Activated CD4-positive, alpha-beta T cell treated with anti-CD3 and anti-CD28 coated beads, Interleukin-2, amount 10 ng/mL, durations not matched to agents 24 days and 14 days (primary cell): ENCODE measurements at regions of chr11 and their contacts with region 1.

Region 1: GRCh38 chr11:128630367-128631230 is 43.2 kb upstream of the ETS1 start:
- DNase-seq: peak; percentile 96
- H3K4me3 Mint-ChIP-seq: peak overlapping the region; percentile 69
- H3K27ac Mint-ChIP-seq: peak overlapping the region; percentile 92
- H3K4me1 Mint-ChIP-seq: peaks cover 61% of the 10 kb centered on the region
- H3K27me3 Mint-ChIP-seq: no peaks in the 10 kb centered on the region

Region 2: DNA sequence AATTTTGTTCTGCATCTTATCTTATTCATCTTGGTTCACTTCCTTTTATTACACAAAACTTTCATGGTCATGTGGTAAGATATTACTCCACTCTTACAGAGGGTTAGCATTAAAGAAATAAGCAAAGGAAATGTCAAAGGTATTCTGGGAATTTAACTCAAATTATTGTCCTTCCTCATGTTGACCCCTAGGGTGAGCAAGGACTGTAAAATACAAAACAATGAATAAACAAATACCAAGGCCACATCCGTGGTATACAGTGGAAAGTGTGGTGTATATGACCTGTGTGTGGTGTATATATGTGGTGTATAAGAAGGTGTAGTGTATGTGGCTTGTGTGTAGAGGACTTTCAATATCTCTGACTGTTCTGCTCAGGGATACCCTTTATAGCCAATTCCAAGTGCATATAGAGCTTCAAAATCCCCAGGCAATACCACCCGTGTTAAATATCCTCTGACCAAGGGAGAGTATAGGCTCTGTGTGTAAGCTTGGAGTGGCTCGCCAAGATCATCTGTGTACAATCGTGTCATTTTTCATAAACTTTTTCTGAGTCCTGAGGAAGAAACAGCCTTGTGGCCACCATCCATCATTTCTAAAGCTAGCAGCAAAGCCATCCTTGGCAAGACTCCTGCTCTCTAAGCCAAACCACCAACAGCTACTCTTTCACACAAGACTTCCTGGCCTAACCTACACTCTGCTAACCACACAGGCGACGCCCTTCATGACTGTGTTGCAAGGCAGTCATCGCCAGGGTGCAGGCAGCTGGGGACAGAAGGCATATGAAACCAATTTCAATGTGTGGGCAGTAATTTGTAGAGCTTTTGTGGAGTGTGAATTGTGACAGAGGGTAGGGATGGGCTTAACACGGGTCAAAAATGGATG is 591.2 kb before region 1 on chr11:
- intact Hi-C with region 1: loop called (anchors 2 kb)
- DNase-seq: peak; percentile 94
- H3K4me3 Mint-ChIP-seq: peak overlapping the region; percentile 73
- H3K27ac Mint-ChIP-seq: peak overlapping the region; percentile 94
- H3K4me1 Mint-ChIP-seq: peaks cover 41% of the 10 kb centered on the region
- H3K27me3 Mint-ChIP-seq: no peaks in the 10 kb centered on the region

Region 3: GRCh38 chr11:128172046-128172878 is 458.3 kb before region 1 on chr11:
- intact Hi-C with region 1: loop called (anchors 1 kb)
- DNase-seq: peak; percentile 95
- H3K4me3 Mint-ChIP-seq: no peak overlapping the region
- H3K27ac Mint-ChIP-seq: peak overlapping the region; percentile 56
- H3K4me1 Mint-ChIP-seq: peaks cover 25% of the 10 kb centered on the region
- H3K27me3 Mint-ChIP-seq: peaks cover 13% of the 10 kb centered on the region

Region 4: GRCh38 chr11:128302425-128303186 is 328.0 kb before region 1 on chr11:
- intact Hi-C with region 1: loop called (anchors 2 kb)
- DNase-seq: peak; percentile 94
- H3K4me3 Mint-ChIP-seq: peak overlapping the region; percentile 81
- H3K27ac Mint-ChIP-seq: peak overlapping the region; percentile 93
- H3K4me1 Mint-ChIP-seq: peaks cover 70% of the 10 kb centered on the region
- H3K27me3 Mint-ChIP-seq: no peaks in the 10 kb centered on the region

Region 5: GRCh38 chr11:128497061-128497775 is 133.4 kb before region 1 on chr11:
- intact Hi-C with region 1: loop called (anchors 1 kb)
- DNase-seq: peak; percentile 77
- H3K4me3 Mint-ChIP-seq: peak overlapping the region; percentile 82
- H3K27ac Mint-ChIP-seq: peak overlapping the region; percentile 96
- H3K4me1 Mint-ChIP-seq: peaks cover 92% of the 10 kb centered on the region
- H3K27me3 Mint-ChIP-seq: no peaks in the 10 kb centered on the region

Region 6: DNA sequence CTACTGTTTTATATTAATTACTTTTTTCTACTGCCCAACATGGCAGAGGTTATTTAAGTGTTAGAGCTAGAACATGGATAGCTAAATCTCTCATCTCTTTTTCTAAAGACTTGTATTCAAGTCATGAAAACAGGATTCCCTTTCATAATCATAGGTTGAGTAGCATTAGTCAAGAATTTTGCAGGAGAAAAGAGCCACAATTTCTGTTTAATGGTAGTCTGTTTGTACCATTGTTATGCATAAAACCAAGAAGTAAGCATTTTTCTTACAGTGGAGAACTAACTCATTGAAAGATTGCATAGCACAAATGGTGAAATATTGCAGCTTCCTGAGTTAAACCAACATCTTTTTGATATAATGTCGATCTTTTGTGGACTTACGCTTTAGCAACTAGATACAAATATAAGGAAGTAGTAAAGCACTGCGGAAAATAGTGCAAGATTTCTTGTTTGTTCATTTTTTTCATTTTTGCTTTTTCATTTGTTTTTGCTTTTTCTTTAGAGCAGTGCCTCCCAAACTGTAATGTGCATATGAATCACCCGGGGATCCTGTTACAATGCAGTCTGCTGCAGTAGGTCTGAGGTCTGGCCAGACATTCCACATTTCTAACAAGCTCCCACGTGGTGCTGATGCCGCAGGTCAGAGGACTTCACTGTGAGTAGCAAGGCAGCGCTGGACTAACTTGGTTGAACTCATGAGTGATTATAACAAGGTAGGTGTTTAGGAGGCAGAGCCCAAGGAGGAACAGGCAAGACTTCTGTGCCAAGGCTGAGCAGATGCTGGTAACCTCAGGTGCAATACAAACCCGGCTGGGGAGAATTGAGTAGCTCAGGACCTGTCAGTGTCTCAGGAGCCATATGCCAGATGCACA is 47.9 kb before region 1 on chr11:
- intact Hi-C with region 1: loop called (anchors 1 kb)
- DNase-seq: no peak
- H3K4me3 Mint-ChIP-seq: peak overlapping the region; percentile 59
- H3K27ac Mint-ChIP-seq: peak overlapping the region; percentile 81
- H3K4me1 Mint-ChIP-seq: peaks cover 35% of the 10 kb centered on the region
- H3K27me3 Mint-ChIP-seq: peaks cover 7% of the 10 kb centered on the region

Region 7: DNA sequence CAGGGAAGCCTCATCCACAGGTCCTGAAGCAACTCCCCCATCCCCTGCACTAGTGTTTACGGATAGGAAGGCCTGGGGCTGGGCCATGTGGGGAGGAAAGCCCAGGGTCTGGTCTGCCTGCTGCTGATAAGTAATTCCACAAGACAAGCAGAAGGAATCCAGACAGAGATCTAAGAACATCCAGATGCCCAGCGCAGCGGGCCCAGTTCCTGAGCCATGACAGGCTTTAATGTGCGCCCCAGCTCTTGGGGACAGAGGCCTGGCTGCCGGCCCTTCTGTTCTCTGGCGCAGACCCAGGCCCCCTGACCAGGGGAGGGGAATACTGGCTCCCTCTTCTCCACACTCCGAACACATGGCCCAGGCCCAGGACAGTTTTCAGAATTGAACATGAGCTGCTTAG is 14.4 kb before region 1 on chr11:
- intact Hi-C with region 1: no loop called
- DNase-seq: no peak
- H3K4me3 Mint-ChIP-seq: no peak overlapping the region
- H3K27ac Mint-ChIP-seq: no peak overlapping the region
- H3K4me1 Mint-ChIP-seq: peaks cover 31% of the 10 kb centered on the region
- H3K27me3 Mint-ChIP-seq: no peaks in the 10 kb centered on the region

Region 8: DNA sequence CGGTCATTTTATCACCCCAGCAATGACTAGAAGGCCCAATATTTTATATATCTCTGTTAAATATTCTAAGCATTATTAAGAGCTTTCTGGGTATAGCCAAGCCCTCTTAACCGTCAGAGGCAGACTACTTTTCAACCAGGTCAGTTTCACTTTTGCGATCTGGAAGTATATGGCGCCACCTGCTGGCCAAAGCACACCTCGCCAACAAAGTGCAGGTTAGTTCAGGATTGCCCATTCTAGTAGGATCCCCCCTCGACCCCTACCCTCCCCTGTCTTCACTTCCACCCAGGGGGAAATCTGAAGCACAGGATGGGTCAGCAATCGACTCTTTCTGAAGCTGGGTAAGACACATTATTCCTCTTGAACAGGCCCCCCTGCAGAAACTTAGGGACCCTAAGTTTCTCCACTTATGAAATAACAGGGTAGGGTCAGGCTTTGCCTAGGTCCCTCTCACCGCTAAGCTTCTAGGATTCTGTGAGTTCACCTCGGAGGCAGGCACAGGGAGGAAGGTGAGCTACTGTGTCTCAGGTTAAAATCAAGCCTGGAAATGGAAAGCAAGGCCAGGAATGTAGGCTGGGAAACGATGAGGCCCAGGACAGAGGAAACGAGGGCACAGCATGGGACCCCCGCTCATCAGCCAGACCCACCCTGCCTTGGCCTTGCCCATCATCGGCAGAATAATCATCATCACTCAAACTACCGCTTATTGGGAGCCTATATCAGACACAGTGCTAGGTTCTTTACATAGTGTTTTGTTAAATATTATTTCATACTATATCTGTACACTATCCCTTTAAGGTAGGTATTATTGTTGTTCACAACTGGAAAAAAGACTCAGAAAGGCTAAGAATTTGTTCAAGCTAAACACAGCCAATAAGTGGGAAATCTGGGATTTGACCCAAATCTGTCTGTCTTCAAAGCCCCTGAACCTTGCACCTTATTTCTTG is 200.8 kb after region 1 on chr11:
- intact Hi-C with region 1: loop called (anchors 1 kb)
- DNase-seq: peak; percentile 95
- H3K4me3 Mint-ChIP-seq: peak overlapping the region; percentile 53
- H3K27ac Mint-ChIP-seq: no peak overlapping the region
- H3K4me1 Mint-ChIP-seq: peaks cover 22% of the 10 kb centered on the region
- H3K27me3 Mint-ChIP-seq: no peaks in the 10 kb centered on the region